ENCODE measurements at regions of chr1 and their contacts with region 1.

Region 1: GRCh38 chr1:224644553-224645154 is 28.5 kb downstream of the CNIH3 start:
- DNase-seq: peak in 3 of 10 donors; percentile 25 to 42 (median 39)
- H3K4me3 ChIP-seq: no peak overlapping the region
- H3K27ac ChIP-seq: no peak overlapping the region
- H3K27me3 ChIP-seq: no peaks in the 10 kb centered on the region
- CTCF ChIP-seq: peak; percentile 57 to 90 (median 80)

Region 2: GRCh38 chr1:224736619-224737352 is 92.1 kb after region 1 on chr1:
- intact Hi-C with region 1: no loop called
- DNase-seq: peak in 5 of 10 donors; percentile 6 to 46 (median 24)
- H3K4me3 ChIP-seq: peak overlapping the region in 24 of 59 donors; percentile 1 to 36 (median 14)
- H3K27ac ChIP-seq: peak overlapping the region in 34 of 59 donors; percentile 7 to 71 (median 47)
- H3K27me3 ChIP-seq: no peaks in the 10 kb centered on the region
- CTCF ChIP-seq: no peak

Region 3: GRCh38 chr1:224851210-224851847 is 206.7 kb after region 1 on chr1:
- intact Hi-C with region 1: loop called (anchors 1 to 2 kb)
- DNase-seq: peak; percentile 41 to 69 (median 53)
- H3K4me3 ChIP-seq: no peak overlapping the region
- H3K27ac ChIP-seq: no peak overlapping the region
- H3K27me3 ChIP-seq: no peaks in the 10 kb centered on the region
- CTCF ChIP-seq: peak in 54 of 56 donors; percentile 30 to 71 (median 61)

Region 4: DNA sequence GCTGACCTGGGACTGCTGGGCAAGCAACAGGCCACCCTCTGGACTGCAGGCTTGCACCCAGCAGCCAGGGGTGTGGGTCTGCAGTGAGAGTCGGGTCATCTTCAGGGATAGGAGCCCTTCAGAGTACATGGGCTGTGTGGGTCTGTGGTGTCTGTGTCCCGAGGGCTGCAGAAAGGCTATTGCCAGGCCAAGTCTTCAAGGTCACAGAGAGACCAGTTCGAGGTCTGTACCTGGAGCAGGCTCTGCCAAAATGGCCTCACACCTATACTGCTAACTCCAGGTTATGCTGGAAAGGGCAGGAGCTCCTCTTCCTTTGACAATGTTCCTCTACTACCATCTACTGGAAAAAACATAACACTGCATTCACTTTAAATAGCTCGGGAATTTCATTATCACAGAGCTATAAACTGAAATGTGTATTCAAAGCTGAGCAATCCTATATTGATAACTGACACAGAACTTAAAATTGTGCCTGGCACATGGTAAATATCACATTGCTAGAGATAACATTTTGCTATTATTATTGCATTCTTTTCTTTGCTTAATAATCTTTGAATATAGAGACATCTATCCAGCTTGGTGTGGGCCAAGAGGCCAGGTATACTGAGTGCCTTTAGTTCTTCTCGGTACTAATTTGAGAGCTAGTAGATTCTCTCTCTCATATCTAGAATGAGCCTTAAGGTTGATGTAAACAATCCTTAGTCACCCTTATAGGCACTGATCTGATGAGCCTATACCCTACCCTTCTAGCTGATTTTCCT is 277.9 kb after region 1 on chr1:
- intact Hi-C with region 1: loop called in 1 of 2 experiments (anchors 2 kb)
- DNase-seq: peak in 1 of 10 donors; percentile 5
- H3K4me3 ChIP-seq: no peak overlapping the region
- H3K27ac ChIP-seq: no peak overlapping the region
- H3K27me3 ChIP-seq: no peaks in the 10 kb centered on the region
- CTCF ChIP-seq: peak; percentile 48 to 84 (median 71)

Measured in dorsolateral prefrontal cortex (tissue), 120 donors.